CD4-positive, alpha-beta T cell (primary cell): ENCODE measurements at regions of chr1 and their contacts with region 1.

Region 1: DNA sequence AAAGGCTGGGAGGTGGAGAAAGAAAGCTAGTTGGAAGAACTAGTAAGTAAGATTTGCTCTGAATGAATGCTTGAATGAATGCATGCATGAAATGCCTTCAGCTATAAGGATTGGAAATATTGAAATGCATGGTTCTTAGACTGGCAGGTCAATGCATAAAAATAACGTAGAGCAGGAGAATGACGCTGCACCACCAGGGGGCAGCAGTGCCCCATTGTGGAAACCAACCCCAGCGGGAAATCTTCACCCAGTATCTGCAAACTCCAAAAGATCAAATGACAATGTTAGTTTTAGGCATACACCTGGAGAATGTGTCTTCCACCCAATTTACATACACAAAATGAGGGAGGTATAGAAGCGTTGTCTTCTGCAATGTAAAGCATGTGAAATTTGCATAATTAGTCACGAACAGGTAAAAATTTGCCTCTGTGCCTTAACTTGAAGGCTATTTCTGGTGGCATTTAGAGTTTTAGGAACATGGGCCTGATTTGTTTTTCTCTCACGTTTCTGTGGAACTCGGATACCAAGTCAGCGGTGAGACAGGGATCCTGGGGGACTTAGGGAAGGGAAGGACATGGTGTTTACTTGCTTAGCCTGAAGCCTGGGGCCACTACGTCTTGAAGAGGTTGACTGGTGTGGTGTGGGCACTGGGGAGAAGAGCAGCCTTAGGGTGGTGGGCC is 78.6 kb downstream of the HHAT start:
- DNase-seq: peak; percentile 41 to 83 (median 67)
- ATAC-seq: peak; percentile 71
- H3K4me3 ChIP-seq: no peak overlapping the region
- H3K4me3 Mint-ChIP-seq: no peak overlapping the region
- H3K27ac ChIP-seq: no peak overlapping the region
- H3K27ac Mint-ChIP-seq: no peak overlapping the region
- H3K4me1 ChIP-seq: no peaks in the 10 kb centered on the region
- H3K4me1 Mint-ChIP-seq: no peaks in the 10 kb centered on the region
- H3K27me3 ChIP-seq: no peaks in the 10 kb centered on the region
- H3K27me3 Mint-ChIP-seq: no peaks in the 10 kb centered on the region
- CTCF ChIP-seq: peak; percentile 95

Region 2: DNA sequence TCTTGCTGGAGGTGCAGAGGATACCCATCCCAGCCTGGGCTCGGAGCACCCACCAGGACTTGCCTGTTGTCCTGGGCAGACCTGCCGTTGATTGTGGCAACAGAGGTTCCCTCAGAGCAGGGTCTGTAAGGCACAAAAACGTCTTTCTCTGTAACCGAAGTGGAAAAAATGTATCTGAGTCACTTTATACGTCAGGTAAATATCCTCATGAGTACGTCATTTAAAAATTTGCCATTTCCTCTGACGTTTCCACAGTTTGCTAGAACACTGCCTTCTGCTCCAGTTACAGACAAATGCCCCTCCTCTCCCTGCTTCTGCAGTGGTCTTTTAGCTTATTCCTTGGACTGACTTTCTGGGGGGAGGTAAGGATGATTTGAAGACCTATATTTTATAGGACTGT is 248.2 kb after region 1 on chr1:
- CTCF ChIA-PET with region 1: no interaction called
- POLR2A ChIA-PET with region 1: no interaction called
- intact Hi-C with region 1: loop called in 1 of 2 experiments (anchors 5 kb)
- DNase-seq: no peak
- ATAC-seq: no peak
- H3K4me3 ChIP-seq: no peak overlapping the region
- H3K4me3 Mint-ChIP-seq: no peak overlapping the region
- H3K27ac ChIP-seq: no peak overlapping the region
- H3K27ac Mint-ChIP-seq: no peak overlapping the region
- H3K4me1 ChIP-seq: no peaks in the 10 kb centered on the region
- H3K4me1 Mint-ChIP-seq: no peaks in the 10 kb centered on the region
- H3K27me3 ChIP-seq: no peaks in the 10 kb centered on the region
- H3K27me3 Mint-ChIP-seq: no peaks in the 10 kb centered on the region
- CTCF ChIP-seq: no peak

Region 3: DNA sequence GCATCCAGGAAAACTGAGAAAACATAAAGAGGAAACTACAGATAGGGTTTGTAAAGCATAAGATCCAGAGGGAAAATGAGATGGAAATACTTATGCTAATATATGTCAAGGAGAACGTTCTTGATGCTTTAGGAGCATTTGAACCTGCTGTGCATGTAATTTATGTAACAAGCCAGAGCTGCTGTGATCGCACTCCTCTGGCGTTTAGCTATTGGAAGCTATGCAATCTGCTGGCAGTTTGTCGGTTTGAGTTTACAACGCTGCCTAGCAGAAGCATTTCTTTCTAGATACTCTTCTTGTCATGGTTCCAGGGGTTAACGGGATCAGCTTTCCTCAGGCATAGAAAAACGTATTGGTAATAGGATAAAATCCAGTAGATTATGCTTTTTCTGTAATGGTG is 543.9 kb after region 1 on chr1:
- CTCF ChIA-PET with region 1: no interaction called
- POLR2A ChIA-PET with region 1: no interaction called
- intact Hi-C with region 1: loop called in 1 of 2 experiments (anchors 2 kb)
- DNase-seq: no peak
- ATAC-seq: no peak
- H3K4me3 ChIP-seq: no peak overlapping the region
- H3K4me3 Mint-ChIP-seq: no peak overlapping the region
- H3K27ac ChIP-seq: no peak overlapping the region
- H3K27ac Mint-ChIP-seq: no peak overlapping the region
- H3K4me1 ChIP-seq: no peaks in the 10 kb centered on the region
- H3K4me1 Mint-ChIP-seq: no peaks in the 10 kb centered on the region
- H3K27me3 ChIP-seq: no peaks in the 10 kb centered on the region
- H3K27me3 Mint-ChIP-seq: no peaks in the 10 kb centered on the region
- CTCF ChIP-seq: no peak

Region 4: DNA sequence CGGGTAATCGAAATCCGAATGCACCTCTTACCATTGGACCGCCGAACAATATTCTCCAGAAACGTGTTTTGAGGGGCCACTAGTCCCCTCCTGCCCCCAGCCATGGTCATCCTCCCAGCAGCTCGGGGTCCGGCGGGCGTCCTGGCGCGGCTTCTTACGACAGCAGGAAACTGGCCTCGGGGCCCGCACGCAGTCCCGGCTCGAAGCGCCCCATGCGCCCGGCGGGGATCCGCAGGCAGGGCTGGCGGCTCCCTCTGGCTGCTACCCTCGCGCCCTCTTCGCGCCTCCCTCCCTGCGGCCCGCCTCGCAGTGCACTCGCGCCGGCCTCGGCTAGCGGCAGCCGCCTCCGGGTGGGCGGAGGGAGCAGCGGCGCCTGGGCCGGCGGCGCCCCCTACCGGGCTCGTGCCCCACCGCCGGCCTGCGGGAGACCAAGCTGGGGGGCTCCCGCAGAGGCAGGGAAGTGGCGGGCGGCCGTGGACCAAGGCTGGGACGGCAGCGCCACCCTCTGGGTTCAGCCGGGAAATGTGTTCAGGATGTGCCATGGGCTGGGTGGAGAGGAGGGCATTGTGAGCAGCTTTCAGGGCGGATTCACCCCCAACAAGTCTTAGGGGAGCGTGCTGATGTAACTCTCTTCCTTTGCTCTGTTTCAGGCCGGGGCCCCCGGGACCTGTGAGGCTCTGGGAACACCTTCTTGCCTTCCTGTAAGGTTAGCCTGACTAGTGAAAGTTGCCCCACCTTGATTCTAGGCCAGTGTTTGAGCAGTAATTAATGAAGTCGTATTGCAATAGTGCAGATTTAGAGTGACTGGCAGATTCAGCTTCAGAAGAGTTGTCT is 726.7 kb after region 1 on chr1 and contains the start of gene KCNH1:
- CTCF ChIA-PET with region 1: interaction called, 6 read pairs
- POLR2A ChIA-PET with region 1: no interaction called
- intact Hi-C with region 1: loop called (anchors 1 kb)
- DNase-seq: peak; percentile 52 to 87 (median 66)
- ATAC-seq: peak; percentile 88
- H3K4me3 ChIP-seq: peak within 1 kb of the TSS; percentile 51
- H3K4me3 Mint-ChIP-seq: peak within 1 kb of the TSS; percentile 71
- H3K27ac ChIP-seq: no peak within 1 kb of the TSS
- H3K27ac Mint-ChIP-seq: no peak within 1 kb of the TSS
- H3K4me1 ChIP-seq: peaks cover 18% of the 10 kb centered on the region
- H3K4me1 Mint-ChIP-seq: peaks cover 9% of the 10 kb centered on the region
- H3K27me3 ChIP-seq: peaks cover 26 to 64% of the 10 kb centered on the region in 2 experiments
- H3K27me3 Mint-ChIP-seq: peaks cover 80% of the 10 kb centered on the region
- CTCF ChIP-seq: peak; percentile 77
- total RNA-seq, gene KCNH1: not detected

Region 5: GRCh38 chr1:211654838-211655787 is 1247.8 kb after region 1 on chr1:
- CTCF ChIA-PET with region 1: no interaction called
- POLR2A ChIA-PET with region 1: no interaction called
- intact Hi-C with region 1: loop called in 1 of 2 experiments (anchors 1 kb)
- DNase-seq: peak; percentile 68 to 88 (median 78)
- ATAC-seq: peak; percentile 98
- H3K4me3 ChIP-seq: no peak overlapping the region
- H3K4me3 Mint-ChIP-seq: no peak overlapping the region
- H3K27ac ChIP-seq: no peak overlapping the region
- H3K27ac Mint-ChIP-seq: no peak overlapping the region
- H3K4me1 ChIP-seq: peaks cover 5% of the 10 kb centered on the region
- H3K4me1 Mint-ChIP-seq: no peaks in the 10 kb centered on the region
- H3K27me3 ChIP-seq: no peaks in the 10 kb centered on the region
- H3K27me3 Mint-ChIP-seq: no peaks in the 10 kb centered on the region
- CTCF ChIP-seq: peak; percentile 89